ENCODE measurements at regions of chr4 and their contacts with region 1.

Region 1: DNA sequence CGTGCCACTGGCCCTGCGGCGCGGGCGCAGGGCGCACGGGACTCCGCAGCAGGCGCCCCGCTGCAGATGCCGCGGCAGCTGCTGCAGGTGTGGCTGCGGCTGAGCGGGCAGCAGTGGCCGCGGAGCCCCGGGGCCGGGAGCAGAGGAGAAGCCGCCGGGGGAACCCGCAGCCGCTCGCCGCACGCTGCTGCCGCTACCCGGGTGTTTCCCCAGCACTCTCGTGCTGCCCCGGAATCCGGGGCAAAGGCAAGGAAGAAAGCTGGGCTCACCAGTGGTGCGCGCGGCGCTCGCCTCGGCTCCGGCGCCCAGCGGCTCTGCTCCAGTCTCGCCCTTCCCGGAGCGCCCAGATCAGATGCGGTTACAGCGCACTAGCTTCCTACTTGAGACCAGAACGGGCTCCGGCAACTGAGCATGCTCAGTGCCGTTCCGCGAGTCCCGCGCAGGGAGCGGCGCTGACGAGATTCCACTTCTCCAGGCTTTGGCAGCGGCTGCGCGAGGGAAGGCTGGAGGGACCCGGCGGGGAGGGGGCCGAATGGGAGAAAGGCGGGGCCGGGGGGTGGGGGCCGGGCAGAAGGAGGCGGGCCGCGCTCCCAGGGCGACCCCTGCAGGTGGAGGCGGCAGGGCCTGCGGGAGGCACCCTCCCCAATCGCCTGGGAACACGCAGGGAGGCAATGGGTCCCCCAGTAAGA is at the start of gene APBB2:
- DNase-seq: peak; percentile 95 to 97
- H3K4me3 ChIP-seq: peak within 1 kb of the TSS; percentile 96 to 97
- H3K27ac ChIP-seq: peak within 1 kb of the TSS; percentile 82 to 86
- H3K4me1 ChIP-seq: peaks cover 0 to 48% (median 15%) of the 10 kb centered on the region in 4 donors
- H3K27me3 ChIP-seq: no peaks in the 10 kb centered on the region
- CTCF ChIP-seq: peak; percentile 53 to 91

Region 2: DNA sequence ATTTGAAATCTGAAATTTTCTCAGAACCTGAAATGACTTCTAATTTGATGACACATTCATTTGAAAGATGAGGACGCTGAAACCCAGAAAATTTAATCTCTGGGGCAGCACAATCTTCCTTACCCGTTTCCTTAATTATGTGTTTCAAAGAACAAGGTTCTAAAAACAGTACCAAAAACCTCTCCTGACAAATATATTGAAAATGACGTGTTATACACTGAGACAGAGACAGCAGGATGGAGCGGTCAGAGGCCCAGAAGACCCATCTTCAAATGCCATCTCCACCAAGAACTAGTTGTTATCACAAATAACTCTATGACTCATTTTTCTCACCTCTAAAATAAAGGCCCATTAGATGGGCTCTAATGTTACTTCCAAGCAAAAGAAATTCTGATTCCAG is 287.2 kb before region 1 on chr4:
- intact Hi-C with region 1: loop called (anchors 2 kb)
- DNase-seq: no peak
- H3K4me3 ChIP-seq: no peak overlapping the region
- H3K27ac ChIP-seq: no peak overlapping the region
- H3K4me1 ChIP-seq: peaks cover 5 to 24% (median 14%) of the 10 kb centered on the region in 4 donors
- H3K27me3 ChIP-seq: no peaks in the 10 kb centered on the region
- CTCF ChIP-seq: no peak

Region 3: DNA sequence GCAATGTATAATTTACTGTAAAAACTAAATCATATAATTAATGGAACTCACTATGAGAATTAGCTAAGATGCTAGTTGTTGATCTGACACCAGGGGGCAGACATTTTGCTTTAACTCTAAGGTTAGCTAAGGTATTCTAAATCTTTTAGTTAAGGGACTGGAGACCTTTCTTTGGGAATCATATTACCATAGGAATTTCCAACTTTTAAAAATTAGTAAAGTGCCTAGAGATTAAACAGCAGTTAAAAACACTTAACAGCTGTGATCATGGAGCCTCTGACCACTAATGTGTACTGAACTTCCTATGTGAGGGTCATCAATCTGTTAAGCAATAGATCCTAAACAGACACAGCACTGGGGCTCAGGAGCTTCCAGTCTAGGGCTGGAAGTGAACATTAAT is 237.9 kb before region 1 on chr4:
- intact Hi-C with region 1: loop called (anchors 5 kb)
- DNase-seq: no peak
- H3K4me3 ChIP-seq: no peak overlapping the region
- H3K27ac ChIP-seq: no peak overlapping the region
- H3K4me1 ChIP-seq: peaks cover 0 to 3% (median 0%) of the 10 kb centered on the region in 4 donors
- H3K27me3 ChIP-seq: no peaks in the 10 kb centered on the region
- CTCF ChIP-seq: peak; percentile 67 to 78

Measured in tibial artery (tissue), 4 donors.